Posterior vena cava (tissue), 2 donors: ENCODE measurements at regions of chr20 and their contacts with region 1.

Region 1: DNA sequence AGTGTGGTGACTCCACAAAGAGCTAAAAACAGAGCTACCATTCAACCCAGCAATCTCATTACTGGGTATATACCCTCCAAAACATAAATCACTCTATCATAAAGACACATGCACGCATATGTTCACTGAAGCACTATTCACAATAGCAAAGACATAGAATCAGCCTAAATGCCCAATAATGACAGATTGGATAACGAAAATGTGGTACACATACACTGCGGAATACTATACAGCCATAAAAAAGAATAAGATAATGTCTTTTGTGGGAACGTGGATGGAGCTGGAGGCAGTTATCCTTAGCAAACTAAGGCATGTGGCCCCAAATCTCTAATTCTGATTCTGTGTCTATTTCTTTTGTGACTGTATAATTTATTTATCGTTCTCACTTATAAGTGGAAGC is 124.5 kb upstream of the PRND start:
- DNase-seq: no peak

Region 2: DNA sequence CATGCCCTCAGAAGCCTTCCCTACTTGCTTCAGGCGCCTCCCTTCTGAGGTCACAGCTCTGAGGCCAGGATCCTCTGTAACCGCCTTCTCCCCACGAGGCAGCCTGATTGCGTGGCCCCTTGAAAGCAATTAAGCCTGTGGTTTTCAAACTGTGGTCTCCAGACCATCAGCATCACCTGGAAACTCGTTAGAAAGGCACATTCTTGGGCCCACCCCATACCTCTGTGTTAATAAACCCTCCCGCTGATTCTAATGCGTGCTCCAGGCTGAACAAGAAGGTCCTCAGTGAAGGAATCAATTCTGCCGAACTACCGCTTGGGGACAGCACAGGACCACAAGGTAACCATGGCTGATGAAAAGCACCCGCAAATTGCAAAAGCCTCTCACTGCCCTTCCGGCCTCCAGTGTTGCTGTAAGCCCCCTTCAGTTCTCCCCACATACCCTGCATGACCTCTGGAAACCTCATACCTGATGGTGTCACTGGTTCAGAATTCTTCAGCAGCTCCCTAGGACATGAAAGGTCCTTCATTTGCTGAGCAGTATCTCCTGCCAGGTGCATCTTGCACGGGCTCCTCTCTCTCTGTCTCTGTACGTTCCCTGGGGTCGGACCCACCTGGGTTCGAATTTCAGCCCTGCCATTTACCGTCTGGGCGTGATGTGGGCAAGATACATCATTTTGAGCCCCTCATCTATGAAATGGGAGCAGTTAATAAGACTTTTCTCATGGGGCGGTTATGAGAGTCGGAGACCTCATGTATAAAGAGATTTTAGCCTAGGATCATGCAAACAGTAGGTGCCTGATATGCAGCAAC is 488.5 kb before region 1 on chr20:
- intact Hi-C with region 1: loop called in 1 of 2 experiments (anchors 5 kb)
- DNase-seq: no peak